HCT116 (cell line): ENCODE measurements at regions of chr11 and their contacts with region 1.

Region 1: DNA sequence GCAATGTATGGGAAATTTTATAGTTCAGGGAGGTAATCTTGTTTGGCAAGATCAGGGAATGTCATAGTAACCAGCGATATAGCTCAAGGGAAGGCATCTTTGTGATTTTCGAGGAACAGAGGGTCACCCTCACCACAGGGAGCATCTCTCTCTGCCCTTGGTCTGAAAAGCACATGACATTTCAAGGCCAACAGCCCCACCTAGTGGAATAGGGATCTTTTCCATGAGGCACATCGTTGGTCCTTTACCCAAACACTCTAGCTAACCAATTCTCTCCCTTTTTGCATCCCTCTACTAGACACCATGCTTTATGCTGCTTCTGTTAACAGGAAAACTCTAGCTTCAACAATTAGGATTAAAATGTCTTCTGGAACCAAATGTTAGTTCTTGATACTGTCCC is 179.0 kb downstream of the GRM5 start:
- DNase-seq: peak; percentile 55
- ATAC-seq: peak; percentile 94
- H3K4me3 ChIP-seq: no peak overlapping the region
- H3K27ac ChIP-seq: no peak overlapping the region
- H3K4me1 ChIP-seq: no peaks in the 10 kb centered on the region
- H3K27me3 ChIP-seq: no peaks in the 10 kb centered on the region
- CTCF ChIP-seq: peak; percentile 59 to 66 (median 59)
- POLR2A ChIP-seq: no peak
- RAD21 ChIP-seq: peak; percentile 86

Region 2: DNA sequence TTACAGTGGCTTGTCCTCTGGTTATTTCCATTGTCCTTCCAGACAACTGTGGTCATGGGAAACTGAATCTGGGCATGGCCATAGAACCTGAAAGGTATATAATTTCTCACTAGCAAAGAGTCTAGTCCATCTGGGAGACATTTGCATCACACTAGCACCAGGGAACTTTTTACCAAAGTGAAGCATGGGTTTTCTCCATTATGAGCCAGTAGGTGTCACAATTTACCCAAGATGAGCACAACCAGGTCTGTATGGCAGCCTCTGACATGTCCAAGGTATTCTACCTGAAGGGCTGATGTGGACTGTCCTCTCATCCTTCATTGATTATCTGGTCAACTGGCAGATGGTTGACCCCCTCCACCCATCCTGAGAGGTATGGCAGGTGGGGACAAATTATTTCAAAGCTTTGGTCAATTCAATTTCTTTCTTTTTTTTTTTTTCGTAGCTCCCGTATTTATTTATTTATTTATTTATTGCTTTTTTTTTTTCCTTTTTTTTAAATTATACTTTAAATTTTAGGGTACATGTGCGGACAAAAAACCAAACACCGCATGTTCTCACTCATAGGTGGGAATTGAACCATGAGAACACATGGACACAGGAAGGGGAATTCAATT is 1423.2 kb before region 1 on chr11:
- CTCF ChIA-PET with region 1: no interaction called
- POLR2A ChIA-PET with region 1: no interaction called
- RAD21 ChIA-PET with region 1: no interaction called
- intact Hi-C with region 1: loop called (anchors 2 kb)
- DNase-seq: peak; percentile 42
- ATAC-seq: peak; percentile 91
- H3K4me3 ChIP-seq: no peak overlapping the region
- H3K27ac ChIP-seq: no peak overlapping the region
- H3K4me1 ChIP-seq: no peaks in the 10 kb centered on the region
- H3K27me3 ChIP-seq: peaks cover 24% of the 10 kb centered on the region
- CTCF ChIP-seq: peak; percentile 27 to 65 (median 43); a peak in 5 of 6 replicates
- POLR2A ChIP-seq: no peak
- RAD21 ChIP-seq: peak; percentile 71

Region 3: GRCh38 chr11:87878373-87878779 is 1008.4 kb before region 1 on chr11:
- CTCF ChIA-PET with region 1: interaction called, 5 read pairs
- POLR2A ChIA-PET with region 1: no interaction called
- RAD21 ChIA-PET with region 1: no interaction called
- intact Hi-C with region 1: loop called (anchors 2 kb)
- DNase-seq: peak; percentile 21
- ATAC-seq: peak; percentile 66
- H3K4me3 ChIP-seq: no peak overlapping the region
- H3K27ac ChIP-seq: no peak overlapping the region
- H3K4me1 ChIP-seq: no peaks in the 10 kb centered on the region
- H3K27me3 ChIP-seq: no peaks in the 10 kb centered on the region
- CTCF ChIP-seq: peak; percentile 42 to 64 (median 53); a peak in 5 of 6 replicates
- POLR2A ChIP-seq: no peak
- RAD21 ChIP-seq: peak; percentile 66

Region 4: DNA sequence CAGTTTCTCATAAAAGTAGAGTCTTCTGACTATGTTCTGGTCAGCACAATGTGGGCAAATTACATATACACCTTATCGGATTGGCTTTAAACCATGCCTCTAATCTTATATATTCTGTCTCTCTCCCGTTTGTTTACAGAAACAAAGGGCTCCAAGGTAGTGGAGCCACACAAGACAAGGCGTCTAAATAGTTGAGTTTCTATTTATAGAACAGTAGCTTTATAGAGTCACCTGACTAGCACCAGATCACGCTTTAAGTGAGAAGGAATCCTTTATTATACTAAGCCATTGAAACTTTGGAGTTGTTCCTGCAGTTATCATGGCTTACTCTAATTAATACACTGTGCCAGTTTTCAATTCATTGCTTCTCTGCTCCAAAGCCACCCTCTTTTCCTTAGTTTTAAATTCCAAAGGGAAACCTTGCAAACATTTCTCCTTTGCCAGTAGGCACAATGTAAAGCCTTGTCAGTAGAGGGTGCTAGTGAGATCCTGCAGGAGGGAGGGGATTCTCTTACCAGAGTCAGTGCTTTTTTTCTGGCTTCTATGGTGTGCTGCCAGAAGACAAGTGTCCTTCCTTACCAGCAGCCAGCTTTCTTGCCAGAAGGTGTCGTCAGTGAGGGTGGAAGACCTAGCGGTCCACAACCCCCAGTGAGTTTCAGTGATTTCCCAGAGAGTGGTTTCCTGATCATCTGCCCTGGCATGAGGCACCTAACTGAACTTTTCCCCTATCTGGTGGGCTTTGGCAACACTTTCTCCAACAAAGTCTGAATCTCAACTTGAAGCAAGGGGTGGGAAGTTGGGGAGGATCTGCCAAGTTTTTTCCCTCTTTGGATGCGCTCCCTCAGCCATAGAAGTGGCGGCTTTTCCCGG is 783.2 kb before region 1 on chr11:
- CTCF ChIA-PET with region 1: no interaction called
- POLR2A ChIA-PET with region 1: no interaction called
- RAD21 ChIA-PET with region 1: no interaction called
- intact Hi-C with region 1: loop called (anchors 5 kb)
- DNase-seq: peak; percentile 85
- ATAC-seq: peak; percentile 98
- H3K4me3 ChIP-seq: no peak overlapping the region
- H3K27ac ChIP-seq: no peak overlapping the region
- H3K4me1 ChIP-seq: peaks cover 0 to 10% of the 10 kb centered on the region in 2 experiments; a peak in 2 of 4 replicates
- H3K27me3 ChIP-seq: no peaks in the 10 kb centered on the region
- CTCF ChIP-seq: peak; percentile 92 to 97 (median 93)
- POLR2A ChIP-seq: no peak
- RAD21 ChIP-seq: peak; percentile 74

Region 5: DNA sequence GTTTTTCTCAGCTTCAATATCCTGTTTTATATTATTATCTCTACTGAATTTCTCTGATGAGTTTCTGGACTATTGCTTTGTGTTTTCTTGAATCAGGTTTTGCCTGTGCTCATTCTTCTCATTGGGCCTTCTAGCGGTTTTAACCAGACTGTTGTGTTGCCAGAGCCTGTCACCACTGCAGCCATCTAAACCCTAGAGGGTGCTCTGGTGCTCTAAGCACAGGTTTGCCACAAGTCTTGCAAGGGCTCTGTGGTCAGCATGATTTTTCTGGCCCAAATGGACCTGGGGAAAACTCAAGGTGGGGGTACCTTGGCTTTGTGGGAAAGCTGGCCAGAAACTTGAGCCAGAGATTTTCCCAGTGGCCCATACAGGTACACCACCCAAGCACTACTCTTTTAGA is 238.5 kb after region 1 on chr11:
- CTCF ChIA-PET with region 1: no interaction called
- POLR2A ChIA-PET with region 1: no interaction called
- RAD21 ChIA-PET with region 1: no interaction called
- intact Hi-C with region 1: no loop called
- DNase-seq: no peak
- ATAC-seq: no peak
- H3K4me3 ChIP-seq: no peak overlapping the region
- H3K27ac ChIP-seq: no peak overlapping the region
- H3K4me1 ChIP-seq: no peaks in the 10 kb centered on the region
- H3K27me3 ChIP-seq: no peaks in the 10 kb centered on the region
- CTCF ChIP-seq: no peak
- POLR2A ChIP-seq: no peak
- RAD21 ChIP-seq: no peak